OCI-LY7 (cell line): ENCODE measurements at regions of chr16 and their contacts with region 1.

Region 1: GRCh38 chr16:10937068-10937859 is 5.0 kb downstream of the DEXI start:
- DNase-seq: no peak
- H3K4me3 ChIP-seq: no peak overlapping the region
- H3K27ac ChIP-seq: no peak overlapping the region
- H3K4me1 ChIP-seq: peaks cover 36% of the 10 kb centered on the region
- CTCF ChIP-seq: no peak

Region 2: DNA sequence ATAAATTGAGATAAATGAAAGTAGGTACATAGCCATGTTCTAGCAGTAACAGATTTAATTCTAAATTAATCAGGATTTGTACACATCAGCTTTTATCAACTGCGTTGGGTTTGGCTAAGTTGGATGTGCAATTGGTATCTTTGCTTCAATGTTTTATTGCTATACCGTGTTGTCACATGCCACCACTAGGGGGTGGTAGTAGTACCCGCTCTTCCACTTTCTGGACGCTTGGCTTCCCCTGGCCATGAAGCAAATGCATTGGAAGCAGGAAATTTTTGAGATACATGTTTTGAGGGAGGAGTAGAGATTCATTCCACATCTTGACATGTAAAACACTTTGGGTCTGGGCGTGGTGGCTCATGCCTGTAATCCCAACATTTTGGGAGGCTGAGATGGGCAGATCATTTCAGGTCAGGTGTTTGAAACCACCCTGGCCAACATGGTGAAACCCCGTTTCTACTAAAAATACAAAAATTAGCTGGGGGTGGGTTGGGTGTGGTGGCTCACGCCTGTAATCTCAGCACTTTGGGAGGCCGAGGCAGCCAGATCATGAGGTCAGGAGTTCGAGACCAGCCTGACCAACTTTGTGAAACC is 415.5 kb before region 1 on chr16:
- CTCF ChIA-PET with region 1: no interaction called
- POLR2A ChIA-PET with region 1: no interaction called
- intact Hi-C with region 1: loop called (anchors 5 kb)
- DNase-seq: peak; percentile 70
- H3K4me3 ChIP-seq: no peak overlapping the region
- H3K27ac ChIP-seq: no peak overlapping the region
- H3K4me1 ChIP-seq: no peaks in the 10 kb centered on the region
- CTCF ChIP-seq: peak; percentile 91